ENCODE measurements at regions of chr5 and their contacts with region 1.

Region 1: GRCh38 chr5:87393331-87393730 is 19.4 kb downstream of the CCNH start:
- DNase-seq: no peak
- ATAC-seq: no peak
- H3K4me3 ChIP-seq: no peak overlapping the region
- H3K4me3 Mint-ChIP-seq: no peak overlapping the region
- H3K27ac ChIP-seq: no peak overlapping the region
- H3K27ac Mint-ChIP-seq: no peak overlapping the region
- H3K4me1 ChIP-seq: no peaks in the 10 kb centered on the region
- H3K4me1 Mint-ChIP-seq: peaks cover 42% of the 10 kb centered on the region
- H3K27me3 ChIP-seq: no peaks in the 10 kb centered on the region
- H3K27me3 Mint-ChIP-seq: no peaks in the 10 kb centered on the region
- CTCF ChIP-seq: no peak

Region 2: GRCh38 chr5:87069974-87070624 is 323.2 kb before region 1 on chr5:
- CTCF ChIA-PET with region 1: no interaction called
- POLR2A ChIA-PET with region 1: no interaction called
- intact Hi-C with region 1: loop called in 1 of 2 experiments (anchors 10 kb)
- DNase-seq: peak in 4 of 14 experiments; percentile 19 to 27 (median 26)
- ATAC-seq: no peak
- H3K4me3 ChIP-seq: no peak overlapping the region
- H3K4me3 Mint-ChIP-seq: no peak overlapping the region
- H3K27ac ChIP-seq: no peak overlapping the region
- H3K27ac Mint-ChIP-seq: no peak overlapping the region
- H3K4me1 ChIP-seq: peaks cover 7% of the 10 kb centered on the region
- H3K4me1 Mint-ChIP-seq: peaks cover 19% of the 10 kb centered on the region
- H3K27me3 ChIP-seq: no peaks in the 10 kb centered on the region
- H3K27me3 Mint-ChIP-seq: no peaks in the 10 kb centered on the region
- CTCF ChIP-seq: no peak

Region 3: DNA sequence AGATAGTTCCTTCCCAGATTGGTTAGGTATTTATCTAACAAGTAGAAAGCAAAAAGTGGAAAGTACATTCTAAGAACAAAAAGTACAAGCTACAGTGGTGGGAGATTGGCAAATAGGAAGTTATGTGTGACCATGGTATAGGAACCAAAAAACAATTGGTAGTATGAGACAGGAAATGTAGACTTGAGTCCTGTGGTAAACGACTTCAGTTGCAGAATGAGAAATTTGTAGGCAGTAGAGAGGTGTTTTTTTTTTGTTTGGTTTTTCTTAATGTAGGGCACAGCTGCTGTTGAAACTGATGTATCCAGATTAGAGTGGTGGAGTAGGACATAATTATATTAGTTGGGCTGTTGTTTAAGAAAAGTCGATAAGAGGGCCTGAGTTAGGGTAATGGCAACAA is 52.6 kb before region 1 on chr5:
- CTCF ChIA-PET with region 1: no interaction called
- POLR2A ChIA-PET with region 1: no interaction called
- intact Hi-C with region 1: loop called in 1 of 2 experiments (anchors 5 kb)
- DNase-seq: peak in 3 of 14 experiments; percentile 59 to 78 (median 61)
- ATAC-seq: peak; percentile 90
- H3K4me3 ChIP-seq: peak overlapping the region; percentile 28
- H3K4me3 Mint-ChIP-seq: peak overlapping the region; percentile 79
- H3K27ac ChIP-seq: peak overlapping the region in 1 of 2 donors; percentile 51
- H3K27ac Mint-ChIP-seq: peak overlapping the region; percentile 84
- H3K4me1 ChIP-seq: no peaks in the 10 kb centered on the region
- H3K4me1 Mint-ChIP-seq: peaks cover 33% of the 10 kb centered on the region
- H3K27me3 ChIP-seq: no peaks in the 10 kb centered on the region
- H3K27me3 Mint-ChIP-seq: no peaks in the 10 kb centered on the region
- CTCF ChIP-seq: no peak

Measured in CD4-positive, alpha-beta T cell (primary cell).